ENCODE measurements at regions of chr6 and their contacts with region 1.

Region 1: DNA sequence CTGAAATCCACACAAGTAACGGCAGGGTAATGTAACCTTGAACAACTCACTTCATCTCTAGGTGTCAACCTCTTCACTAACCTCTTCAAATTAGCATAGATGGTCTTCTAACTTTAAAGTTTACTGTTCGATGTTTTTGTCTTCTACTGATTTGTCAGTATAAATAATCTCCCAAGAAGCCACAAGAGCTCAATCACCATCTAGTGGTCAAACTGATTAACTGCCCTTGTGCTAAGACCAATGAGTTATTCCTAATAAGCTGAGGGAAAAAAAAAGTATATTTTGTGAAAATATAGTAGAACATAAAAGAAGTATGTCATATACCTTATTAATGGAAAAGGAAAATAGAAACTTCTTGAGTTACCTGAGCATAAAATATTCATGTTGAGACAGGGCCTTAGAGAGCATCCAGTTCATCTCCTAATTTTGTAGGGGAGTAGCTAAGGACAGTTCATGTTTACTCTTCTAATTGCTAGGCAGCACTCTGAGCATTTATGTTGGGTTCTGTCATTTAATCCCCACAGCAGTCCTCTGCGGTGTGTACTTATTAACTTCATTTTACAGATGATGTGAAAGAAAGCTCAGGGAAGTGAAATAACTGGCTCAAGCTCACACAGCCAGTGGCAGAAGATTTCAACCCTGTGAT is 317.1 kb downstream of the ESR1 start:
- DNase-seq: peak in 3 of 14 experiments; percentile 38 to 51 (median 49)
- ATAC-seq: peak; percentile 48
- H3K4me3 ChIP-seq: no peak overlapping the region
- H3K4me3 Mint-ChIP-seq: no peak overlapping the region
- H3K27ac ChIP-seq: no peak overlapping the region
- H3K27ac Mint-ChIP-seq: peak overlapping the region; percentile 57
- H3K4me1 ChIP-seq: no peaks in the 10 kb centered on the region
- H3K4me1 Mint-ChIP-seq: peaks cover 4% of the 10 kb centered on the region
- H3K27me3 ChIP-seq: no peaks in the 10 kb centered on the region
- H3K27me3 Mint-ChIP-seq: no peaks in the 10 kb centered on the region
- CTCF ChIP-seq: peak; percentile 50

Region 2: GRCh38 chr6:151317103-151317994 is 807.2 kb before region 1 on chr6:
- CTCF ChIA-PET with region 1: no interaction called
- POLR2A ChIA-PET with region 1: no interaction called
- intact Hi-C with region 1: no loop called
- DNase-seq: no peak
- ATAC-seq: no peak
- H3K4me3 ChIP-seq: no peak overlapping the region
- H3K4me3 Mint-ChIP-seq: no peak overlapping the region
- H3K27ac ChIP-seq: no peak overlapping the region
- H3K27ac Mint-ChIP-seq: no peak overlapping the region
- H3K4me1 ChIP-seq: no peaks in the 10 kb centered on the region
- H3K4me1 Mint-ChIP-seq: no peaks in the 10 kb centered on the region
- H3K27me3 ChIP-seq: no peaks in the 10 kb centered on the region
- H3K27me3 Mint-ChIP-seq: peaks cover 5% of the 10 kb centered on the region
- CTCF ChIP-seq: no peak

Region 3: DNA sequence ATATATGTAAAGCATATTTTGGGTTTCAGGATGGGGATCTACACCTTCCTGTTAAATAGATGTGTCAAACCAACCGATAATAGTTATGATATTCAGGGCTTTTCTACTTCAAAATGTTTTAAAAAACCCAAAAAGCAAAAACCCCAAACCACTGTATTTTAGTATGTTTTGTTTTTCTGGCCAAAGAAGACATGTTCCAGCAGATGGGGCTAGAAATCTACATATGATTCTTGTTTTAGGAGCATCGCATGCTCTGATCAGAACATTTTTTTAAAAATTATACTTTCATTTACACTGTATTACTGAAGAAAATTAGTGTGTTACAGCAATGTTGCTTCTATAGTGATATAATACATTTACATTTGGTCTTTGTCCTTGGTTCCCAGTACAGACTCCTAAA is 683.6 kb before region 1 on chr6:
- CTCF ChIA-PET with region 1: no interaction called
- POLR2A ChIA-PET with region 1: no interaction called
- intact Hi-C with region 1: loop called in 1 of 2 experiments (anchors 10 kb)
- DNase-seq: peak in 3 of 14 experiments; percentile 46 to 67 (median 66)
- ATAC-seq: peak; percentile 66
- H3K4me3 ChIP-seq: no peak overlapping the region
- H3K4me3 Mint-ChIP-seq: no peak overlapping the region
- H3K27ac ChIP-seq: no peak overlapping the region
- H3K27ac Mint-ChIP-seq: no peak overlapping the region
- H3K4me1 ChIP-seq: peaks cover 6% of the 10 kb centered on the region
- H3K4me1 Mint-ChIP-seq: peaks cover 52% of the 10 kb centered on the region
- H3K27me3 ChIP-seq: no peaks in the 10 kb centered on the region
- H3K27me3 Mint-ChIP-seq: no peaks in the 10 kb centered on the region
- CTCF ChIP-seq: peak; percentile 65

Region 4: GRCh38 chr6:151675746-151676416 is 448.7 kb before region 1 on chr6:
- CTCF ChIA-PET with region 1: interaction called, 6 read pairs
- POLR2A ChIA-PET with region 1: no interaction called
- intact Hi-C with region 1: loop called in 1 of 2 experiments (anchors 1 kb)
- DNase-seq: peak; percentile 16 to 78 (median 36)
- ATAC-seq: peak; percentile 88
- H3K4me3 ChIP-seq: no peak overlapping the region
- H3K4me3 Mint-ChIP-seq: no peak overlapping the region
- H3K27ac ChIP-seq: no peak overlapping the region
- H3K27ac Mint-ChIP-seq: no peak overlapping the region
- H3K4me1 ChIP-seq: no peaks in the 10 kb centered on the region
- H3K4me1 Mint-ChIP-seq: no peaks in the 10 kb centered on the region
- H3K27me3 ChIP-seq: no peaks in the 10 kb centered on the region
- H3K27me3 Mint-ChIP-seq: no peaks in the 10 kb centered on the region
- CTCF ChIP-seq: peak; percentile 87

Region 5: DNA sequence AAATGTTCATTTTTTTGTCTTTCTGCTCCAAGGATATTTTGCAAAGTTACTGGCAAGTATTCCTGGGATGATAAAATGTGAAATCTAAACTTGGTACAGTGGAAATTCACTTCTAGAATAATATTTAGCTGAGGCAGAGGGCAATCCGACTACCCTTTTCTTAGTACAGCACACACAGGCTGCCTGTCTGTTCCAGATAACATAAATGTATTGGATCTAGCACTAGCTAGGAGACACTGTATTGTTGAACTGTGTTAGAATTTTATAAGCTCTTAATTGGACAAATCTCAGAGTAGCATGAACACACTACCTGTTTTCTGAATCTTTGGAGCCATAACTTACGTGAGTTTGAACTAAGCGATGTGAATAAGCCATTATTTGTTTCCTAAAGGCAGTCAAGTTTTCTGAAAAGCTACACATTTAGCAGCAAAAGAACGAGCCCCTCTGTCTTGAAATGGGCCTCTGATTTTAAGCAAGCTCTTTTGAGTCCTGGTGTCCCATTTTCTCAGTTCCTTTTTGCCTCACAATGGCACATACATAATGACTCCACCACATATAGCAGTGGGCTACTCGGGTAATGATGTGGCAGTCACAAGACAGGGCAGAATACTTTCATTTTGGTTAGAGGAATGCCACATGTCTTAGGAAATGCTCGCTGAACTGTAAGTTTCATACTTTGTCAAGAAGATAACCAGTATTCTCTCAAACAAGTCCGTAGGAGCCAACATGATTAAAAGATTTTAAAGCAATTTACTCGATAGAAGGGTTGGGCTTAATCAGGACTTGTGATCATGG is 433.6 kb before region 1 on chr6:
- CTCF ChIA-PET with region 1: interaction called, 4 read pairs
- POLR2A ChIA-PET with region 1: interaction called, 5 read pairs
- intact Hi-C with region 1: loop called (anchors 1 to 2 kb)
- DNase-seq: peak in 4 of 14 experiments; percentile 8 to 67 (median 62)
- ATAC-seq: peak; percentile 77
- H3K4me3 ChIP-seq: peak overlapping the region; percentile 58
- H3K4me3 Mint-ChIP-seq: peak overlapping the region; percentile 82
- H3K27ac ChIP-seq: peak overlapping the region; percentile 41 to 71
- H3K27ac Mint-ChIP-seq: peak overlapping the region; percentile 89
- H3K4me1 ChIP-seq: peaks cover 5% of the 10 kb centered on the region
- H3K4me1 Mint-ChIP-seq: peaks cover 28% of the 10 kb centered on the region
- H3K27me3 ChIP-seq: no peaks in the 10 kb centered on the region
- H3K27me3 Mint-ChIP-seq: no peaks in the 10 kb centered on the region
- CTCF ChIP-seq: no peak

Region 6: GRCh38 chr6:151765444-151765886 is 359.1 kb before region 1 on chr6:
- CTCF ChIA-PET with region 1: no interaction called
- POLR2A ChIA-PET with region 1: no interaction called
- intact Hi-C with region 1: loop called in 1 of 2 experiments (anchors 10 kb)
- DNase-seq: peak in 6 of 14 experiments; percentile 10 to 65 (median 50)
- ATAC-seq: peak; percentile 56
- H3K4me3 ChIP-seq: no peak overlapping the region
- H3K4me3 Mint-ChIP-seq: no peak overlapping the region
- H3K27ac ChIP-seq: no peak overlapping the region
- H3K27ac Mint-ChIP-seq: no peak overlapping the region
- H3K4me1 ChIP-seq: no peaks in the 10 kb centered on the region
- H3K4me1 Mint-ChIP-seq: peaks cover 24% of the 10 kb centered on the region
- H3K27me3 ChIP-seq: no peaks in the 10 kb centered on the region
- H3K27me3 Mint-ChIP-seq: peaks cover 15% of the 10 kb centered on the region
- CTCF ChIP-seq: peak; percentile 72

Region 7: GRCh38 chr6:152277826-152278329 is 153.3 kb after region 1 on chr6:
- CTCF ChIA-PET with region 1: no interaction called
- POLR2A ChIA-PET with region 1: no interaction called
- intact Hi-C with region 1: no loop called
- DNase-seq: no peak
- ATAC-seq: no peak
- H3K4me3 ChIP-seq: no peak overlapping the region
- H3K4me3 Mint-ChIP-seq: no peak overlapping the region
- H3K27ac ChIP-seq: no peak overlapping the region
- H3K27ac Mint-ChIP-seq: no peak overlapping the region
- H3K4me1 ChIP-seq: no peaks in the 10 kb centered on the region
- H3K4me1 Mint-ChIP-seq: no peaks in the 10 kb centered on the region
- H3K27me3 ChIP-seq: no peaks in the 10 kb centered on the region
- H3K27me3 Mint-ChIP-seq: no peaks in the 10 kb centered on the region
- CTCF ChIP-seq: no peak